CD4-positive, alpha-beta memory T cell (primary cell): ENCODE measurements at regions of chr3 and their contacts with region 1.

Region 1: DNA sequence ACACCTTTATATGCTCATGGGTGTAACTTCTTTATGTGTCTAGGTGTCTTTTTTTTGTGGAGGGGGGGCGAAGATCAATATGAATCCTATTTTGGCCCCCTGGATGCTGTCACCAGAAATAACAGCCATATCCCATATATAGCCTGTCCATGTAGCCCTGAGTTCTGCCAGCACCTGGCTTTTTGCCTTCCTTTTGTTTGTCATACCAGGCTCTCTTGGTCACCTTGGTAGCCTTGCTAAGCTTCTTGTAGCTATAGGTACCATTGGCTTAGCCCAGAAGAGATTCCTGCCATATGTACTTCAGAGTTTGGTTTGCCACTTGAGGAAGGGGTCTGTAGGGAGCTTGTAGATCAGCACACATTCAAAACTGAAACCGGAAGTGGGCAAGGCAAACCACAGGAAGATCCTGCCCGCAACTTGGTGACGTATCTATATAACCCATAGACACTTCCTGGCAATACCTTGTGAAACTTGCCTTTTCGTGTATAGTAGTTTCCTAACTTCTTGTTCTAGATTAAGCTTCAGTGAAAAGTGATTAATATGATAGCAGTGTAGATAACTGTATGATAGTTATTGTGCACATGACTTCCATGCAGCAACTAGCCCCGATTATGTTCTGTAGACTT is 11.9 kb downstream of the RASA2 start:
- DNase-seq: peak; percentile 91 to 95 (median 93)
- H3K4me3 ChIP-seq: peak overlapping the region; percentile 25 to 48
- H3K4me3 Mint-ChIP-seq: peak overlapping the region; percentile 74 to 91 (median 84)
- H3K27ac ChIP-seq: peak overlapping the region; percentile 65
- H3K27ac Mint-ChIP-seq: peak overlapping the region in 6 of 7 donors; percentile 96 to 98 (median 97)
- H3K4me1 ChIP-seq: peaks cover 83% of the 10 kb centered on the region
- H3K4me1 Mint-ChIP-seq: peaks cover 34 to 73% (median 56%) of the 10 kb centered on the region in 4 donors
- H3K27me3 ChIP-seq: no peaks in the 10 kb centered on the region
- H3K27me3 Mint-ChIP-seq: no peaks in the 10 kb centered on the region

Region 2: GRCh38 chr3:141477224-141477623 is 21.5 kb before region 1 on chr3:
- CTCF ChIA-PET with region 1: interaction called, 6 read pairs
- POLR2A ChIA-PET with region 1: interaction called, 4 read pairs
- intact Hi-C with region 1: loop called (anchors 1 kb)
- DNase-seq: no peak
- H3K4me3 ChIP-seq: no peak overlapping the region
- H3K4me3 Mint-ChIP-seq: no peak overlapping the region
- H3K27ac ChIP-seq: no peak overlapping the region
- H3K27ac Mint-ChIP-seq: peak overlapping the region in 1 of 7 donors; percentile 57
- H3K4me1 ChIP-seq: peaks cover 23% of the 10 kb centered on the region
- H3K4me1 Mint-ChIP-seq: peaks cover 13 to 38% (median 26%) of the 10 kb centered on the region in 4 donors
- H3K27me3 ChIP-seq: no peaks in the 10 kb centered on the region
- H3K27me3 Mint-ChIP-seq: no peaks in the 10 kb centered on the region

Region 3: DNA sequence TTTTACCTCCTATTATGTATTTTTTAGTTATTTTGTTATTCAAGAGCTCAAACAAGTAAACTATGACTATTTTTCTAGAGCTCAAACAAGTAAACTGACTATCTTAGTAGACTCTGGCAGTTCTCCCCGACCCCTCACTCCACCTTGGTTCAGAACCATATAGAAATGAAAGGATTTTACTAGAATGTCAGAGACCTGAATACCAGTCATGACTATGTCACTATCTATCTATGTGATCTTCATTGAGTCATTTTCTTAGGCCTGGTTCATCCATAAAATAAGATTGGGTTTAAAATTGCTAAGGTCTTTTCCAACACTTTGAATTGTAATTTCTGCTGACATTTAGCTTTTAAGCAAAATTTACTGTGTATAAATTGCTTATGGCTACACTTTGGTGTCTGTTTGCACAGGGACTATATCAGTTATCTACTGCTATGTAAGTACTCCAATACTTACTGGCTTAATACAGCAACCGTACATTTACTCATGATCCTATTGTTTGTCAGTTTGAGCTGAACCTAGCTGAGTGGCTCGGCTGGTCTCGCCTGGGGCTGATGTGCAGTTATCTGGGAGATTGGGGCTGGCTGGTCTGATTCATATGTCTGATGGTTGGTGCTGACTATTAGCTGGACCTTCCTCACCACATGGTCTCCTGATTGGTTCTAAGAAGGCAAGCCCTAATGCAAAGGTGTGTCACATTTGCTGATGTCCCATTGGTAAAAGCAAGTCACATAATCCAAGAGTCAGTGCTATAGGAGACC is 25.1 kb after region 1 on chr3:
- CTCF ChIA-PET with region 1: interaction called, 5 read pairs
- POLR2A ChIA-PET with region 1: interaction called, 4 read pairs
- intact Hi-C with region 1: loop called (anchors 1 kb)
- DNase-seq: no peak
- H3K4me3 ChIP-seq: no peak overlapping the region
- H3K4me3 Mint-ChIP-seq: peak overlapping the region in 2 of 8 donors; percentile 13 to 44
- H3K27ac ChIP-seq: no peak overlapping the region
- H3K27ac Mint-ChIP-seq: peak overlapping the region in 5 of 7 donors; percentile 29 to 84 (median 52)
- H3K4me1 ChIP-seq: peaks cover 66% of the 10 kb centered on the region
- H3K4me1 Mint-ChIP-seq: peaks cover 51 to 87% (median 70%) of the 10 kb centered on the region in 4 donors
- H3K27me3 ChIP-seq: no peaks in the 10 kb centered on the region
- H3K27me3 Mint-ChIP-seq: no peaks in the 10 kb centered on the region

Region 4: GRCh38 chr3:141530133-141530768 is 31.5 kb after region 1 on chr3:
- CTCF ChIA-PET with region 1: interaction called, 5 read pairs
- POLR2A ChIA-PET with region 1: interaction called, 8 read pairs
- intact Hi-C with region 1: loop called (anchors 1 kb)
- DNase-seq: peak; percentile 44 to 54 (median 52)
- H3K4me3 ChIP-seq: no peak overlapping the region
- H3K4me3 Mint-ChIP-seq: peak overlapping the region; percentile 16 to 84 (median 74)
- H3K27ac ChIP-seq: peak overlapping the region; percentile 37
- H3K27ac Mint-ChIP-seq: peak overlapping the region; percentile 68 to 96 (median 92)
- H3K4me1 ChIP-seq: peaks cover 87% of the 10 kb centered on the region
- H3K4me1 Mint-ChIP-seq: peaks cover 51 to 73% (median 64%) of the 10 kb centered on the region in 4 donors
- H3K27me3 ChIP-seq: no peaks in the 10 kb centered on the region
- H3K27me3 Mint-ChIP-seq: no peaks in the 10 kb centered on the region

Region 5: GRCh38 chr3:141544697-141545096 is 46.0 kb after region 1 on chr3:
- CTCF ChIA-PET with region 1: interaction called, 3 read pairs
- POLR2A ChIA-PET with region 1: interaction called, 7 read pairs
- intact Hi-C with region 1: loop called (anchors 2 kb)
- DNase-seq: peak; percentile 51 to 59 (median 53)
- H3K4me3 ChIP-seq: peak overlapping the region in 1 of 2 donors; percentile 39
- H3K4me3 Mint-ChIP-seq: peak overlapping the region; percentile 41 to 84 (median 73)
- H3K27ac ChIP-seq: peak overlapping the region; percentile 57
- H3K27ac Mint-ChIP-seq: peak overlapping the region; percentile 49 to 95 (median 87)
- H3K4me1 ChIP-seq: peaks cover 48% of the 10 kb centered on the region
- H3K4me1 Mint-ChIP-seq: peaks cover 57 to 81% (median 70%) of the 10 kb centered on the region in 4 donors
- H3K27me3 ChIP-seq: no peaks in the 10 kb centered on the region
- H3K27me3 Mint-ChIP-seq: no peaks in the 10 kb centered on the region

Region 6: GRCh38 chr3:141553055-141553454 is 54.3 kb after region 1 on chr3:
- CTCF ChIA-PET with region 1: interaction called, 4 read pairs
- POLR2A ChIA-PET with region 1: interaction called, 13 read pairs
- intact Hi-C with region 1: loop called (anchors 1 kb)
- DNase-seq: peak; percentile 68 to 84 (median 78)
- H3K4me3 ChIP-seq: no peak overlapping the region
- H3K4me3 Mint-ChIP-seq: peak overlapping the region in 7 of 8 donors; percentile 6 to 79 (median 57)
- H3K27ac ChIP-seq: no peak overlapping the region
- H3K27ac Mint-ChIP-seq: peak overlapping the region; percentile 77 to 91 (median 85)
- H3K4me1 ChIP-seq: peaks cover 65% of the 10 kb centered on the region
- H3K4me1 Mint-ChIP-seq: peaks cover 46 to 58% (median 52%) of the 10 kb centered on the region in 4 donors
- H3K27me3 ChIP-seq: no peaks in the 10 kb centered on the region
- H3K27me3 Mint-ChIP-seq: no peaks in the 10 kb centered on the region